MCF 10A (cell line): ENCODE measurements at regions of chr16 and their contacts with region 1.

Region 1: DNA sequence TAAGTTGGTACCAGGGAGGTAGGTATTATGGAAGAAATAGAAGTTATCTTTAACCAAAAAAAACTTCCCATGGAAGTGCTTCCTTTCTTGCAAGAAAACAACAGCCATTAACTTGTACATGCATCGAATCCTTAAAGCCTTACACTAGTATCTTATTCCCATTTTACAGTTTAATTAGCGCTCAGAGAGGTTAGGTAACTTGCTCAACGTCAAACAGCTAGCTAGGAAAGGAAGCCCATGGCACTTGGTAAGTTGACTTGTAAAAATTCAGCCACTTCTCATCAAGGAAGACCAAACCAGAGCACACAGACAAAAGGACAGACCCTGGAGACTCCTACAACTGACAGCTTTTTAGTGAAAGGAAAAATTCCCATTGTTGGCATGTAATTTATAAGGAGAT is 3.5 kb upstream of the NTAN1 start:
- DNase-seq: no peak
- H3K4me3 Mint-ChIP-seq: no peak overlapping the region
- H3K27ac Mint-ChIP-seq: no peak overlapping the region
- H3K4me1 Mint-ChIP-seq: peaks cover 4% of the 10 kb centered on the region
- H3K27me3 Mint-ChIP-seq: no peaks in the 10 kb centered on the region
- CTCF ChIP-seq: no peak

Region 2: DNA sequence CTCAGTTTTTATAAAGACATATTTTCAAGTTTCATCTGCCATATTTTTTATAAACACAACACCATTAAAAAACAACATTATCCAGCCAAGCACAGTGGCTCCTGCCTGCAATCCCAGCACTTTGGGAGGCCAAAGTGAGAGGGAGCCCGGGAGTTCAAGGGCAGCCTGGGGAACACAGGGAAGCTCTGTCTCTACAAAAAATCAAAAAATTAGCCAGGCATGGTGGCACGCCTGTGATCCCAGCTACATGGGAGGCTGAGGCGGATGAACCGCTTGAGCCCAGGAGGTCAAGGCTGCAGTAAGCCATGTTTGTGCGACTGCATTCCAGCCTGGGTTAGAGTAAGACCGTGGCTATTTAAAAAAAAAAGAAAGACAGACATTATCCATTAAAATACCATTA is 13.8 kb after region 1 on chr16:
- CTCF ChIA-PET with region 1: interaction called, 24 read pairs
- POLR2A ChIA-PET with region 1: no interaction called
- intact Hi-C with region 1: no loop called
- DNase-seq: no peak
- H3K4me3 Mint-ChIP-seq: no peak overlapping the region
- H3K27ac Mint-ChIP-seq: no peak overlapping the region
- H3K4me1 Mint-ChIP-seq: peaks cover 6% of the 10 kb centered on the region
- H3K27me3 Mint-ChIP-seq: no peaks in the 10 kb centered on the region
- CTCF ChIP-seq: no peak

Region 3: DNA sequence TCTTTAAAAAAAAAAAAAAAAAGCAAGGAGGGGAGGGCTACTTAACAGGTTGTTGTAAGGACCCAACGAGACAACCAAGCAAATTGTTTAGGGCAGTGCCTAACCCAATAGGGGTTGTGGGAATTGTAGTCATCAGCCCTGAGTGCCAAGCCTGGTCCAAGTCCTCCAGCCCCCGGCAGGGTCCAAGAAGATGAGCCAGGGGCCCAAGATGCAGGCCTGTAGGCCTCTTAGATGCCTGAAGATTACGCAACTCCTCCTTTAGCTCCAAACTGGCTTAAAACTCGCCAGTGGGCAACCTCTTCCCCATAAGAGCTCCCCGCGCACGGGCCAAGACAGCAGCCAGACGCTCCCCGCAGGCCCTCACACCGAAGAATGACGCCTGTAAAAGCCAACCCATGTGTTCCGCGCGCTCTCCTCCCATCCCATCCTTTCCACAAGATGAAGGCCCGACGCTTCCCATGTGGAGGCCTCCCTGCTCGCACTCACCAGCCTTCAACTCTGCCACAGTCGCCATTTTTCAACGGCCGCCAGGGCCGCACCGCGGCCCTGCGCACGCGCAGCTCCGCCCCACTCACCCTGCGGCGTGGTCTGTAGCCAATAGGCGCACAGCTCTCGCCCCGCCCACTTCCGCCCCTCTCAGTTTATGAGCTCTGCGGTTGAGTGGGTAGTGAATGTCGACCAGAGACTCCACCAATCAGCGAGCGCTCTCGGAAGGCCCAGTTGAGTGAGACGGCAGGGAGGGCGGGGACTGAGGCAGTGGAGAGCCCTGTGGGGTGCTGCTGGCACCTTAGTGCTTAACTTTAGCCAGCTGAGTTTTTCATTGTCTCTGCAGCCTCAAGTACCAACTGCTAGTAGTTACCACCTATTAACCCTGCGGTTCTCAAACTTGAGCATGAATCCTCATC is 829.0 kb after region 1 on chr16 and contains the start of gene CEP20:
- CTCF ChIA-PET with region 1: no interaction called
- POLR2A ChIA-PET with region 1: no interaction called
- intact Hi-C with region 1: no loop called
- DNase-seq: peak; percentile 99
- H3K4me3 Mint-ChIP-seq: peak within 1 kb of the TSS; percentile 94
- H3K27ac Mint-ChIP-seq: peak within 1 kb of the TSS; percentile 91
- H3K4me1 Mint-ChIP-seq: peaks cover 15% of the 10 kb centered on the region
- H3K27me3 Mint-ChIP-seq: no peaks in the 10 kb centered on the region
- CTCF ChIP-seq: no peak
- total RNA-seq, gene CEP20: 54.7 and 70.1 TPM in 2 replicates